IMR-90 (cell line): ENCODE measurements at regions of chr2 and their contacts with region 1.

Region 1: GRCh38 chr2:112433932-112434730 is 686 bp upstream of the RGPD8 start:
- DNase-seq: no peak
- ATAC-seq: no peak
- H3K4me3 ChIP-seq: no peak overlapping the region
- H3K27ac ChIP-seq: no peak overlapping the region
- H3K4me1 ChIP-seq: no peaks in the 10 kb centered on the region
- H3K27me3 ChIP-seq: no peaks in the 10 kb centered on the region
- CTCF ChIP-seq: no peak
- POLR2A ChIP-seq: no peak
- RAD21 ChIP-seq: no peak

Region 2: DNA sequence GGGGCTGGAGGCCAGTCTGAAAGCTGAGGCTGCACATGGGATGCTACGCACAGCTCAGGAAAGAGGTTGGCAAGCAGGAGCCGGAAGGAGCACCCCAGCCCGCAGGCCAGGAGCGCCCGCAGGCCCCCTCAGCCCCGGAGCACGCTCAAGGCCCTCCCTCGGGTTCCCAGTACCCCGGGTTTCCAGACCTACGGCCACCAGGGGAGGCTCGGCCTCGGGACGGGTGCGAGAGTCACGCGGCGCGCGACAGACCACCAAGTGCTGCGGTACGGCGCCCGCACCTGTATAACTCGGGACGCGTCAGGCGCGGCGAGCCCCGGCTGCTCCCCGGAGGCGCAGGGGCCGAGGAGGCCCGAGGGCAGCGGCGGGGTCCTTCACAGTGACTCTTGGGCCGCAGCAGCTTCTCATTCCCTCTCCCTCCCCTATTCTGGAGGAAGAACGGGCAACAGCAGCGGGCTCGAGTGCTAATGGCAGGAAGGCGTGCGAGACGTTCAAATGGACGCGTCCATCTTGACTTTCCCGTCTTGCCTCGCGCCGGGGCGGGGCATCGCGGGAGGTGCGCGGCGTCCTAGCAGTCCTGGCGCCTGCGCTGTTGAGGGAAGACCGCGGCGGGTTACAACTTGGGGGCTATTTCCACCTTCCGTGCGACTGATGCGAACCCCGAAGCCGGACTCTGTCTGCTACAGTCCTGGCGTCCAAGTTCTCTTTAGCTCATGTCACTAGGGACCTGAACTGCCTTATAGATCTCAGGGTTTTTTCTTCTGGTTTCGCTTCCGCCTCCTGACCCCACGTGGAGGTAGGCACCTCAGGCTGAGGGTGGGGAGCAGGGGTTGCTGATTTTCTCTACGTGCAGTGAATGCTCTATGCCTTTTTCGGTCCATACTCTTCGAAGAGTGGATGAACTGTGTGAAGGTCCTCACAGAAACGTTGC is 550.2 kb before region 1 on chr2 and contains the start of gene ANAPC1:
- CTCF ChIA-PET with region 1: no interaction called
- POLR2A ChIA-PET with region 1: no interaction called
- dilution Hi-C with region 1: no loop called
- in situ Hi-C with region 1: no loop called
- intact Hi-C with region 1: loop called (anchors 5 kb)
- DNase-seq: peak; percentile 69
- ATAC-seq: peak; percentile 99
- H3K4me3 ChIP-seq: peak within 1 kb of the TSS; percentile 61
- H3K27ac ChIP-seq: peak within 1 kb of the TSS; percentile 60
- H3K4me1 ChIP-seq: no peaks in the 10 kb centered on the region
- H3K27me3 ChIP-seq: no peaks in the 10 kb centered on the region
- CTCF ChIP-seq: no peak
- POLR2A ChIP-seq: peak; percentile 79; the same call in 1 of the 2 replicates
- RAD21 ChIP-seq: no peak
- total RNA-seq, gene ANAPC1: 50.7 and 70.0 TPM in 2 replicates

Region 3: DNA sequence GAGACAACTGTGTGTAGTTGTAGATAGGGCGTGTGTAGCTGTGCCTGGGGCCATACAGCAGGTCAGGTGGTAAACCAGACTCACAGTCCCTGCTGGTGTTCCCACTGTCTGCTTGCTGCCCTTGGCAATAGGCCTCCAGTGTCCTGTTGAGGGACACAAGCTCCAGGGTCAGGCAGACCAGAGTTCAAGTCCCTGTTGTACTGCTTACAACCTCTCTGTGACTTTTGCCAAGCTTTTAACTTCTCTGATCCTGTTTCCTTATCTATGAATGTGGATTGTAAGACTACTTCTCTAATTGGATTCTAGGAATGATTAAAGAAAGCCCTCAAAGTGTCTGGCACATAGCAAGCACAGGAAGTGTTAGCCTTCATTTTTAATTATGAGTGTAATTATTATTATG is 467.1 kb before region 1 on chr2:
- CTCF ChIA-PET with region 1: no interaction called
- POLR2A ChIA-PET with region 1: no interaction called
- dilution Hi-C with region 1: no loop called
- in situ Hi-C with region 1: no loop called
- intact Hi-C with region 1: no loop called
- DNase-seq: no peak
- ATAC-seq: no peak
- H3K4me3 ChIP-seq: no peak overlapping the region
- H3K27ac ChIP-seq: no peak overlapping the region
- H3K4me1 ChIP-seq: no peaks in the 10 kb centered on the region; the same call in 1 of the 2 replicates
- H3K27me3 ChIP-seq: peaks cover 12% of the 10 kb centered on the region
- CTCF ChIP-seq: no peak
- POLR2A ChIP-seq: no peak
- RAD21 ChIP-seq: no peak

Region 4: GRCh38 chr2:112121682-112122254 is 312.4 kb before region 1 on chr2:
- CTCF ChIA-PET with region 1: no interaction called
- POLR2A ChIA-PET with region 1: no interaction called
- dilution Hi-C with region 1: no loop called
- in situ Hi-C with region 1: no loop called
- intact Hi-C with region 1: loop called (anchors 5 kb)
- DNase-seq: peak; percentile 66
- ATAC-seq: no peak
- H3K4me3 ChIP-seq: no peak overlapping the region
- H3K27ac ChIP-seq: no peak overlapping the region
- H3K4me1 ChIP-seq: no peaks in the 10 kb centered on the region
- H3K27me3 ChIP-seq: no peaks in the 10 kb centered on the region
- CTCF ChIP-seq: peak; percentile 71
- POLR2A ChIP-seq: no peak
- RAD21 ChIP-seq: peak; percentile 74

Region 5: DNA sequence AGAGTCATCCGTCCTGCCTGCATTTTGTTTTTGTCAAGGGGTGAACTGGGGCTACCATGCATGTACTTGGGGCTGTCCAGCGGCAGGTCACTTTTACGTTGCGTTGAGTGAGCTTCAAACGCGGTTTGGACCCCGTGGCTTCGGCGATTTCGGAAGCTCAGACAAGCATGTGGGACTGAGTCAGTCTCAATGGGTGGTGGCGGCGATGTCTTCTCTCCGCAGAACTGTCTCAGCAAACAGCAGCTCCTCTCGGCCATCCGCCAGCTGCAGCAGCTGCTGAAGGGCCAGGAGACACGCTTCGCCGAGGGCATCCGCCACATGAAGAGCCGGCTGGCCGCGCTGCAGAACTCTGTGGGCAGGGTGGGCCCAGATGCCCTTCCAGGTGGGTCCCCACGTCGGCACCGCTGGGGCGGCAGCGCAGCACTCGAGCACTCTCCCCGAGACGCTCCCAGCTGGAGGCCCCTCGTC is 274.6 kb before region 1 on chr2:
- CTCF ChIA-PET with region 1: no interaction called
- POLR2A ChIA-PET with region 1: no interaction called
- dilution Hi-C with region 1: no loop called
- in situ Hi-C with region 1: no loop called
- intact Hi-C with region 1: no loop called
- DNase-seq: no peak
- ATAC-seq: no peak
- H3K4me3 ChIP-seq: no peak overlapping the region
- H3K27ac ChIP-seq: no peak overlapping the region
- H3K4me1 ChIP-seq: peaks cover 5% of the 10 kb centered on the region
- H3K27me3 ChIP-seq: no peaks in the 10 kb centered on the region
- CTCF ChIP-seq: no peak
- POLR2A ChIP-seq: no peak
- RAD21 ChIP-seq: no peak

Region 6: GRCh38 chr2:112254466-112255239 is 179.5 kb before region 1 on chr2 and contains the start of gene ZC3H8:
- CTCF ChIA-PET with region 1: no interaction called
- POLR2A ChIA-PET with region 1: no interaction called
- dilution Hi-C with region 1: no loop called
- in situ Hi-C with region 1: loop called (anchors 25 kb)
- intact Hi-C with region 1: loop called (anchors 2 kb)
- DNase-seq: peak; percentile 75
- ATAC-seq: peak; percentile 99
- H3K4me3 ChIP-seq: peak within 1 kb of the TSS; percentile 57
- H3K27ac ChIP-seq: peak within 1 kb of the TSS; percentile 15; the same call in 1 of the 2 replicates
- H3K4me1 ChIP-seq: no peaks in the 10 kb centered on the region
- H3K27me3 ChIP-seq: no peaks in the 10 kb centered on the region
- CTCF ChIP-seq: no peak
- POLR2A ChIP-seq: no peak; the same call in 1 of the 2 replicates
- RAD21 ChIP-seq: no peak
- total RNA-seq, gene ZC3H8: 0.18 and 1.7 TPM in 2 replicates

Region 7: DNA sequence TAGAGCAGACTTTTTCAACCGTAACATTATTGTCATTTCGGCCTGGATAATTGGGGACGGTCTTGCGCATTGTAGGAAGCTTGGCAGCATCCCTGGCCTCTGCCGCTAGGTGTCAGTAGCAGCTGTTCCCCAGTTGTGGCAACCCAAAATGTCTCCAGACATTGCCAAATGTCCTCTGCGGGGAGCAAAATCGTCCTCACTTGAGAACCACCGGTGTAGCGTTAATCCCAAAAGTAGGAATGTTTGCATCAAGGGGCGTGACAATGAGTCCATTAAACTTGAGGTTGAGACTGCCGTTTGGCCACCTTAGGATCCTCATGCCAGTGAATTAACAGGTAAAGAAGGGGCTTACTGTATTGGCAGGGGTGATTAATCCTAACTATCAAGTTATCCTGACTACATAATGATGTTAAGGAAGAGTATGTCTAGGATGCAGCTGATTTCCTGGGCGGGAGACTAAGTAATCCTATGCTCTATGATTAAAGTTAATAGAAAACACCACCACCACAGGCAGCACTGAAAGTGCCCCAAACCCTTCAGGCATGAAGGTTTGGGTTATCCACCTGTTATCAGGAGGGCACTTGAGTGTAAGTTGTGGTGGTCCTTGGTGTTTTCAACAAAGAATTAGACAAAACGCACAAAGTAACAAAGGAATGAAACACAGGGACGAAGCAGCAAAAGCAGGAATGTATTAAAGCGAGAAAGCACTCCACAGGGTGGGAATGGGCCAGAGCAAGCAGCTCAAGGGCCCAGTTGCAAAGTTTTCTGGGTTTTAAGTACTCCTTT is 174.4 kb before region 1 on chr2:
- CTCF ChIA-PET with region 1: no interaction called
- POLR2A ChIA-PET with region 1: interaction called, 3 read pairs
- dilution Hi-C with region 1: no loop called
- in situ Hi-C with region 1: loop called (anchors 25 kb)
- intact Hi-C with region 1: loop called (anchors 2 kb)
- DNase-seq: peak; percentile 76
- ATAC-seq: peak; percentile 63
- H3K4me3 ChIP-seq: no peak overlapping the region
- H3K27ac ChIP-seq: no peak overlapping the region
- H3K4me1 ChIP-seq: no peaks in the 10 kb centered on the region
- H3K27me3 ChIP-seq: peaks cover 4% of the 10 kb centered on the region; the same call in 1 of the 2 replicates
- CTCF ChIP-seq: peak; percentile 98
- POLR2A ChIP-seq: no peak
- RAD21 ChIP-seq: peak; percentile 96

Region 8: GRCh38 chr2:112666764-112667122 is 232.6 kb after region 1 on chr2:
- CTCF ChIA-PET with region 1: no interaction called
- POLR2A ChIA-PET with region 1: no interaction called
- dilution Hi-C with region 1: no loop called
- in situ Hi-C with region 1: no loop called
- intact Hi-C with region 1: no loop called
- DNase-seq: no peak
- ATAC-seq: peak; percentile 12; the same call in 1 of the 2 replicates
- H3K4me3 ChIP-seq: no peak overlapping the region
- H3K27ac ChIP-seq: no peak overlapping the region
- H3K4me1 ChIP-seq: 0 out of 2 replicates have a peak, but pooled peaks cover under 1% of the 10 kb centered on the region
- H3K27me3 ChIP-seq: no peaks in the 10 kb centered on the region
- CTCF ChIP-seq: no peak
- POLR2A ChIP-seq: no peak
- RAD21 ChIP-seq: no peak

Region 9: GRCh38 chr2:112712903-112713584 is 278.9 kb after region 1 on chr2:
- CTCF ChIA-PET with region 1: no interaction called
- POLR2A ChIA-PET with region 1: no interaction called
- dilution Hi-C with region 1: no loop called
- in situ Hi-C with region 1: no loop called
- intact Hi-C with region 1: no loop called
- DNase-seq: peak; percentile 84
- ATAC-seq: peak; percentile 67
- H3K4me3 ChIP-seq: no peak overlapping the region
- H3K27ac ChIP-seq: no peak overlapping the region; the same call in 1 of the 2 replicates
- H3K4me1 ChIP-seq: peaks cover 8% of the 10 kb centered on the region
- H3K27me3 ChIP-seq: peaks cover 3% of the 10 kb centered on the region; the same call in 1 of the 2 replicates
- CTCF ChIP-seq: no peak
- POLR2A ChIP-seq: no peak
- RAD21 ChIP-seq: no peak